ENCODE measurements at regions of chr5 and their contacts with region 1.

Region 1: GRCh38 chr5:116137544-116138378 is 52.9 kb downstream of the COMMD10 start:
- DNase-seq: peak; percentile 18
- H3K4me3 ChIP-seq: no peak overlapping the region
- H3K27ac ChIP-seq: no peak overlapping the region
- H3K27me3 ChIP-seq: no peaks in the 10 kb centered on the region
- CTCF ChIP-seq: peak; percentile 88

Region 2: GRCh38 chr5:115920171-115920725 is 217.5 kb before region 1 on chr5:
- CTCF ChIA-PET with region 1: no interaction called
- POLR2A ChIA-PET with region 1: no interaction called
- DNase-seq: no peak
- H3K4me3 ChIP-seq: no peak overlapping the region
- H3K27ac ChIP-seq: no peak overlapping the region
- H3K27me3 ChIP-seq: no peaks in the 10 kb centered on the region
- CTCF ChIP-seq: no peak

Region 3: DNA sequence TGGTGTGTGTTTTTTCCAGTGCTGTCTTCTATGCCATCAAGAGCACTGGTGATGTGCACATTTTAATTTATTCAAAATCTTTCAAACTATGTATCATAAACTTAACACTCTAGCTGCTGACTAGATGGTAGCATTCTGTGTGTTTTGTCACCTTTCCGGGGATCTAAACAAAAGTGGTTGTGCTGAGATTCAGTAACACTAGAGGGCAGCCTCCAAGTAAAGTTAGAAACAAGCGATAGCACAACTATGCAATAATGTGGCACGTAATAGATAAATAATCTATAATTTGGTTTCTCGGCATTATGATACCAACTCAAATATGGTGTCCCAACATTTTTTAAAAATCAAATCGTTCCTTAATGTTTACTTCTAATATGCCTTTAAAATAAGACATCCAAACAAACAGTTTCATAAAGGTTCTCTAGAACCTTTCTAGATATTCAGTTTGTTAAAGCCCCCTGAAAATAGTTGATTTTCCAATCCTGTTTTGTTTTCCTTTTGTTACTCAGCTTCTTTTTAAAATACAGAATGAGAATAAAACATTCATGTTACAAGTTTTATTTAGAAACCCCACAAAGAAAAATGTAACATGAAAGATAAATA is 420.0 kb after region 1 on chr5:
- CTCF ChIA-PET with region 1: interaction called, 16 read pairs
- POLR2A ChIA-PET with region 1: no interaction called
- DNase-seq: no peak
- H3K4me3 ChIP-seq: no peak overlapping the region
- H3K27ac ChIP-seq: no peak overlapping the region
- H3K27me3 ChIP-seq: no peaks in the 10 kb centered on the region
- CTCF ChIP-seq: peak; percentile 58

Measured in AG04450 (cell line).